ENCODE measurements at regions of chr10 and their contacts with region 1.

Region 1: DNA sequence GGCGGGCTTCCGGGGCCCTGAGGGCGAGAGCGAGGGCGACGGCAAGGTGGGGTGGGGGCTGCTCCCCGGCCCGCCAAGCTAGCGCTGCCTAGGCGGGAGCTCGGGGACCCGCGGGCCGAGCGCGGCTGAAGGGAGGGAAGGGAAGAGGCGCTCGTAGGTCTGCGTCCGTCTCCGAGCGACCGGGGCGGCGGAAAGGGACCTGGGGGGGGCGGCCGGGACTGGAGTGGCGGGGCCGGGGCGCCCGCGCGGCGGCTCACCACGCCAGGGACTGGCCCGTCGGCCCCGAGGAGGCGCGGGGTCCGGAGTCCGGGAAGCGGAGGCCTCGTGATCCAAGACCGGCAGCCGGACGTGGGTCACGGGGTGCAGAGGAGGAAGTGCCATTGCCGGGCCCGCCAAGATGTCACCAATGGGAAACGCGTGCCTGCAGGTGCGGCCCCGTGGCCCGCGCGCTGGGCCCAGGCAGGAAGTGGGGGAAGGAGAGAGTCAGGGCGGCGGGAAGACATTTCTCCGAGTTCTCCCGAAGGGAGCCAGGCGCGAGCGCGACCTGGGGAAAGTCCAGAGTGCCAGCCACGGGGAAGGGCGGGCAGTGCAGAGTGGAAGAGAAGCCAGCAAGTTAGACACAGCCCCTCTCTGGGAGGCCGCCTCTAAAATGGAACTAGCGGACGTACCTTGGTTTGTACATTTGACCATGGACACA is 11.9 kb downstream of the HNRNPF start:
- DNase-seq: peak; percentile 75 to 97 (median 90)
- ATAC-seq: peak; percentile 89
- H3K4me3 ChIP-seq: peak overlapping the region; percentile 54 to 68
- H3K27ac ChIP-seq: peak overlapping the region; percentile 98 to 99
- H3K4me1 ChIP-seq: peaks cover 27 to 81% of the 10 kb centered on the region in 2 donors
- H3K27me3 ChIP-seq: no peaks in the 10 kb centered on the region
- CTCF ChIP-seq: no peak

Region 2: DNA sequence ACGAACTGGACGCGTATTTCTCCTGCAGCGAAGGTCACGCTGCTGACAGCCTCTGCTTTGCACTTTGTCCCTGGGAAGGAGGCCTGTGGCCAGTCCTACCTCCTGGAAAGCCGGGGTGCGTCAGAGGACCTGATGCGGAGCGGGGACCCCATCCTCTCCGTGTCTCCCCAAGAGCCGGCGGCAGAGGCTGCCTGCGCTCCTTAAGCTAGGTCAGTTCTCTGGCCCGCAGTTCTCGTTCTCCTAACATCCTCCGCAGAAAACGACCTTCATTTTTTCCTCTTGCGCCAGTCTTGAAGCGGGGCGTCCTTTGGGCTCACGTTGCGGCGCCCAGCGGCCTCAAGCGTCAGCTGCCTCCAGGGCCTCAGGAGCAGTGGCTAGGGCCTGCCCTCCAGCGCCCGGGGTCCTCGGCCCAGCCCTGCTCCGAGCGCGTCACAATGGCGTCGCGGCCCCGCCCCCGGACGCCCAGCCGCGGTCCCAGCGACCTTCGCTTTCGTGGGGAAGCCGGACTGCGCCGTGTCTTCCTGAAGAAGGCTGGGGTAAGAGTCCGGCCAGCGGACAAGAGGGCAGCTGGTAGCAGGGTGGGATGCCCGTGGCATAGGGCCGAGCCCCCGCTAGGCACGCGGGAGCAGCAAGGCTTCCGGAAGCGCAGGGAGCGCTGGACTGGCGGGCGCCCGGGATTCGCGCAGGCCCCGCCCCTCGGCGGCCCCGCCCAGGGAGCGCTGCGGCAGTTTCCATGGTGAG is 39.5 kb after region 1 on chr10 and contains the start of gene ZNF487:
- intact Hi-C with region 1: loop called in 1 of 2 experiments (anchors 5 kb)
- DNase-seq: peak; percentile 91 to 98 (median 95)
- ATAC-seq: peak; percentile 98
- H3K4me3 ChIP-seq: peak within 1 kb of the TSS; percentile 57 to 68
- H3K27ac ChIP-seq: peak within 1 kb of the TSS; percentile 98 to 99
- H3K4me1 ChIP-seq: peaks cover 6 to 44% of the 10 kb centered on the region in 2 donors
- H3K27me3 ChIP-seq: no peaks in the 10 kb centered on the region
- CTCF ChIP-seq: no peak
- polyA plus RNA-seq, gene ZNF487: 7.5 to 11.3 (median 9.6) TPM

Measured in left lung (tissue), 14 donors.